ENCODE measurements at regions of chr11 and their contacts with region 1.

Region 1: DNA sequence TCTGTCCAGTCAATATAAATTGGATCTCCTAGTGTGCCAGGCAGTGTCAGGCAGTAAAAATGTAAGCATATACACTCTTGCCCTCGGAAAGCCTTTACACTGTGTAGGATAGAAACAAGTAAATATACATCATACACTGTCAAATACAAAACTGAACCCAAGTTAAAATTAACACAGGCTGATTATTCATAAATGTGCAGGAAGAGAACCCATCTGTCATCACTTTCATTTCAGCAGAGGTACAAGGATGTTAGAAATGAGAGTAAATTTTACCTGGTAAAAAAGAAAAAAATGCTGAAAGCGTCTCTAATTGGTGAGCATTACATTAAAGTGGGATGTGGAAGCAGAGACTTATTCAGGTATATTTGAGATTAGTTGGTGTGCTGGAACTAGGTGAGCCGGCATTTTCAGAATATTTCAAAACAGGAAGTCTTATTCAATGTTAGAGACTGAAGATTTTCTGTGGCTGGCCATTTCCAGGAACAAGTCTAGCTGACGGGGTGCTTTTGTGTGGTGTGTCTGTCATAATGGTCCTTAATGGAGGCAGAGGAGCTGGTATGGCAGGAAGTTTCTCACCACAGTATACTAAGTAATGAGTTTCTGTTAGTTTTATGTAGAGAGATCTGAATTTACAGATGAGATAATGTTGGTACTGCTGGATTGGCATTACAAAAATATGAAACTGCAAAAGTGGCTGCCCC is 192.6 kb downstream of the CASP12 start:
- DNase-seq: peak; percentile 87
- H3K4me3 Mint-ChIP-seq: peak overlapping the region; percentile 64
- H3K27ac Mint-ChIP-seq: peak overlapping the region; percentile 89
- H3K4me1 Mint-ChIP-seq: peaks cover 48% of the 10 kb centered on the region
- H3K27me3 Mint-ChIP-seq: no peaks in the 10 kb centered on the region

Region 2: GRCh38 chr11:104380358-104380757 is 325.3 kb before region 1 on chr11:
- CTCF ChIA-PET with region 1: no interaction called
- POLR2A ChIA-PET with region 1: no interaction called
- intact Hi-C with region 1: no loop called
- DNase-seq: no peak
- H3K4me3 Mint-ChIP-seq: no peak overlapping the region
- H3K27ac Mint-ChIP-seq: no peak overlapping the region
- H3K4me1 Mint-ChIP-seq: no peaks in the 10 kb centered on the region
- H3K27me3 Mint-ChIP-seq: no peaks in the 10 kb centered on the region

Region 3: DNA sequence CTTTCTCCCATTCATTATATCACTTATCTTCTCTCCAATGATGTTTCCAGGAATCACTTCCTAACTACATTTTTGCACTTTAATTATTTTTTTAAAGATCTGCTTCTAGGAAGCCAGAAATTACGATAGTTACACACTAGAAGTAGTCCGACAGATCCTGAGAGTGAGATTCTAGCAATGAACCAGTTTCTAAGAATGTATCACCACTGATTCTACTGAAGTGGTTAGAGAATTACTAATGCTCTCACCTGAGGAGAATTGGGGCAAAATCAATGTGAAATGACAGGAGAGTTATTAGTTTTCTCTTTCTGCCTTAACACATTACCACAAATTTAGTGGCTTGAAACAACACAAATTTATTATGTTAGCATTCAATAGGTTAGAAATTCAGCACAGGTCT is 48.6 kb before region 1 on chr11:
- CTCF ChIA-PET with region 1: no interaction called
- POLR2A ChIA-PET with region 1: no interaction called
- intact Hi-C with region 1: loop called (anchors 1 kb)
- DNase-seq: no peak
- H3K4me3 Mint-ChIP-seq: no peak overlapping the region
- H3K27ac Mint-ChIP-seq: no peak overlapping the region
- H3K4me1 Mint-ChIP-seq: peaks cover 28% of the 10 kb centered on the region
- H3K27me3 Mint-ChIP-seq: no peaks in the 10 kb centered on the region

Region 4: DNA sequence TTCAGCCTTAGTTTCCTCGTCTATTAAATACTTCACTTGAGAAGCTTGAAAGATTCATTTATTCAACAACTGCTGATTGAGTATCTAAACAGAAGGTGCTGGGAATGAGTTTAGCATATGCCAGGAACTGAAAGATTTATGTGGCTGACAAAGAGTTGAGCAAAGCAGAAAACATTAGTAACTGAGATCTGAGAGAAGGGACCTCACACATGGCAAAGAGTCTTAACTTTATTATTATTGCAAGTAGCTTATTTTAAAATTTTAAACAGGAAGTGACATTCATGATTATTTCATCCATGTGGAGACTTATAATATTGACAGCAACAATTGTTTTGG is 59.0 kb after region 1 on chr11:
- CTCF ChIA-PET with region 1: no interaction called
- POLR2A ChIA-PET with region 1: no interaction called
- intact Hi-C with region 1: loop called (anchors 1 kb)
- DNase-seq: no peak
- H3K4me3 Mint-ChIP-seq: no peak overlapping the region
- H3K27ac Mint-ChIP-seq: no peak overlapping the region
- H3K4me1 Mint-ChIP-seq: peaks cover 16% of the 10 kb centered on the region
- H3K27me3 Mint-ChIP-seq: no peaks in the 10 kb centered on the region

Region 5: GRCh38 chr11:104968355-104968855 is 262.8 kb after region 1 on chr11 and contains the start of gene CASP4:
- CTCF ChIA-PET with region 1: no interaction called
- POLR2A ChIA-PET with region 1: no interaction called
- intact Hi-C with region 1: loop called (anchors 2 kb)
- DNase-seq: no peak
- H3K4me3 Mint-ChIP-seq: peak within 1 kb of the TSS; percentile 89
- H3K27ac Mint-ChIP-seq: peak within 1 kb of the TSS; percentile 92
- H3K4me1 Mint-ChIP-seq: peaks cover 36% of the 10 kb centered on the region
- H3K27me3 Mint-ChIP-seq: no peaks in the 10 kb centered on the region
- total RNA-seq, gene CASP4: 58.2 to 58.3 TPM

Region 6: DNA sequence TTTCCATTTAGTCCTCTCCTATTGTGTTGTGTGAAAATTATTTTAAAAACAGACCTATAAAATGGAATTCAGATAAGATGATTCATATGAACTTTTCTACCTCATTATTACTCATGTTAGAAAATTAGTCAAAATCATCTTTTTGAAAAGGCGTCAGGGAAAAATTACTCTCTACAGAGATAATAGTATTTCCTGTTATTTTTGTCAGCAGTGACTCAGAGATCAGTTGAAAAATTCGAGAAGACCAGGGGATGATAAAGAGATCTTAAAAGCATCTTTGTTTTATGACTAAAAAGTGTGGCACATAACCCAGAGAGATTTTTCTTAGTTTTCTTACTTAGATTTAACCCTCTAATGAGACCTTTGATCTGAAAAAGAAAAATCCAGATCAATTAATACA is 591.8 kb after region 1 on chr11:
- CTCF ChIA-PET with region 1: no interaction called
- POLR2A ChIA-PET with region 1: no interaction called
- intact Hi-C with region 1: loop called (anchors 1 kb)
- DNase-seq: no peak
- H3K4me3 Mint-ChIP-seq: no peak overlapping the region
- H3K27ac Mint-ChIP-seq: peak overlapping the region; percentile 58
- H3K4me1 Mint-ChIP-seq: peaks cover 24% of the 10 kb centered on the region
- H3K27me3 Mint-ChIP-seq: peaks cover 3% of the 10 kb centered on the region